Endothelial cell of umbilical vein (primary cell): ENCODE measurements at regions of chr21 and their contacts with region 1.

Region 1: GRCh38 chr21:35256467-35256988 is 207.4 kb upstream of the RUNX1 start:
- DNase-seq: peak; percentile 98
- H3K4me3 ChIP-seq: peak overlapping the region in 2 of 3 experiments; percentile 20 to 47
- H3K27ac ChIP-seq: peak overlapping the region; percentile 78
- H3K4me1 ChIP-seq: peaks cover 15% of the 10 kb centered on the region
- H3K27me3 ChIP-seq: no peaks in the 10 kb centered on the region
- CTCF ChIP-seq: no peak
- POLR2A ChIP-seq: no peak

Region 2: GRCh38 chr21:34807146-34807880 is 449.2 kb before region 1 on chr21:
- CTCF ChIA-PET with region 1: no interaction called
- POLR2A ChIA-PET with region 1: interaction called, 3 read pairs
- dilution Hi-C with region 1: no loop called
- intact Hi-C with region 1: loop called (anchors 10 kb)
- DNase-seq: peak; percentile 94
- H3K4me3 ChIP-seq: no peak overlapping the region
- H3K27ac ChIP-seq: peak overlapping the region; percentile 100
- H3K4me1 ChIP-seq: peaks cover 37% of the 10 kb centered on the region
- H3K27me3 ChIP-seq: no peaks in the 10 kb centered on the region
- CTCF ChIP-seq: no peak
- POLR2A ChIP-seq: no peak

Region 3: DNA sequence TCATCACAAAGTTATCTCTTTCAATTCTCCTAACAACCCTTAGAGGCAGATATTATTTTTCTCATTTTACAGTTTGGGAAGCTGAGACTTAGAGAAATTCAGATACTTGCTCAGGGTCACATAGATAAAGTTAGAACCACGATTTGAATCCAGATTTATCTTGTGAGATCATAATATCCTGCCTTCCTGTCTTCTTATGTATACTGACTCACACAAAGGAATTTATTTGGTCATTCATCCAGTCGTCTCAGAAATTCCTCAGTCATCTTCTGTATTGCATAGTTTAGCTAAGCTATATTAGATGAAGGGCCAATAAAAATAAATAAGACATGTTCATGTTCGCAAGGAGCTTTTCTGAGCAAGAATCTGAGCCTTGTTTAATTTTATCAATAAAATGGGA is 171.7 kb before region 1 on chr21:
- CTCF ChIA-PET with region 1: no interaction called
- POLR2A ChIA-PET with region 1: no interaction called
- dilution Hi-C with region 1: no loop called
- intact Hi-C with region 1: loop called (anchors 5 kb)
- DNase-seq: peak; percentile 73
- H3K4me3 ChIP-seq: no peak overlapping the region
- H3K27ac ChIP-seq: peak overlapping the region; percentile 77
- H3K4me1 ChIP-seq: peaks cover 25% of the 10 kb centered on the region
- H3K27me3 ChIP-seq: no peaks in the 10 kb centered on the region
- CTCF ChIP-seq: no peak
- POLR2A ChIP-seq: no peak

Region 4: GRCh38 chr21:35113064-35113463 is 143.5 kb before region 1 on chr21:
- CTCF ChIA-PET with region 1: no interaction called
- POLR2A ChIA-PET with region 1: no interaction called
- dilution Hi-C with region 1: no loop called
- intact Hi-C with region 1: no loop called
- DNase-seq: no peak
- H3K4me3 ChIP-seq: no peak overlapping the region
- H3K27ac ChIP-seq: no peak overlapping the region
- H3K4me1 ChIP-seq: no peaks in the 10 kb centered on the region
- H3K27me3 ChIP-seq: no peaks in the 10 kb centered on the region
- CTCF ChIP-seq: no peak
- POLR2A ChIP-seq: no peak

Region 5: DNA sequence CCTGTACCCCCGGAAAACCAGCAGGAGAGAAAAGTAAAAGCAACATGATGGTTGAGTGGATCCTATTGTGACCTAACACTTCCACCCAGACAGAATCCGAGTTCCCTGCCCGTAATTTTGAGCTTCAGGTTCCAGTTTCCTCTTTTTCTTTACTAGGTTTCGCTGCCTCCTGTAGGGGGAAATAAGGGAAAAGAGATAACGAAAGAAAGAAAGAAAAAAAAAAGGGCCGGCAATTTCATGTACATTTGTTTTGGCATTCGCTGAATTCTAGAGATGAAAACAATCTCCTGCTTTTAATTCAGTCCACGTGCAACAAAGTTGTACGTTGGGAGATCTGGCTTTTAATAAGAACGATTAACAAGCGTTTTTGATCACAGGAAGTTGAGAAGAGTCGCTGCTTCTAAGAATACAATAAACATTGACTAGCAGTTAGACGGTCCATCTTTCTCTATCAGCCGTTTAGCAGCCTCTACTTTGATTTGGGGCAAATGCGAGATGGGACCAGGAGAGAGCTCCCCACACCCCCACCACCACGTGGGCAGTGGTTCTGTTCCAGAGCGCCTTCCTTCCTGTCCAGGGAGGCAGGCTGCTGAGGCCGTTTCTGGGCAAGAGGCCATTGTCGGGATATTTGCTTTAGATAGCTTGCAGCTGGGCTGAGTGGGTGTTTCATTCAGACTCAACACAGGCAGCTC is 51.5 kb before region 1 on chr21:
- CTCF ChIA-PET with region 1: interaction called, 13 read pairs
- POLR2A ChIA-PET with region 1: interaction called, 5 read pairs
- dilution Hi-C with region 1: no loop called
- intact Hi-C with region 1: loop called (anchors 1 kb)
- DNase-seq: peak; percentile 96
- H3K4me3 ChIP-seq: peak overlapping the region in 1 of 3 experiments; percentile 24
- H3K27ac ChIP-seq: peak overlapping the region; percentile 53
- H3K4me1 ChIP-seq: peaks cover 35% of the 10 kb centered on the region
- H3K27me3 ChIP-seq: no peaks in the 10 kb centered on the region
- CTCF ChIP-seq: no peak
- POLR2A ChIP-seq: peak; percentile 42

Region 6: DNA sequence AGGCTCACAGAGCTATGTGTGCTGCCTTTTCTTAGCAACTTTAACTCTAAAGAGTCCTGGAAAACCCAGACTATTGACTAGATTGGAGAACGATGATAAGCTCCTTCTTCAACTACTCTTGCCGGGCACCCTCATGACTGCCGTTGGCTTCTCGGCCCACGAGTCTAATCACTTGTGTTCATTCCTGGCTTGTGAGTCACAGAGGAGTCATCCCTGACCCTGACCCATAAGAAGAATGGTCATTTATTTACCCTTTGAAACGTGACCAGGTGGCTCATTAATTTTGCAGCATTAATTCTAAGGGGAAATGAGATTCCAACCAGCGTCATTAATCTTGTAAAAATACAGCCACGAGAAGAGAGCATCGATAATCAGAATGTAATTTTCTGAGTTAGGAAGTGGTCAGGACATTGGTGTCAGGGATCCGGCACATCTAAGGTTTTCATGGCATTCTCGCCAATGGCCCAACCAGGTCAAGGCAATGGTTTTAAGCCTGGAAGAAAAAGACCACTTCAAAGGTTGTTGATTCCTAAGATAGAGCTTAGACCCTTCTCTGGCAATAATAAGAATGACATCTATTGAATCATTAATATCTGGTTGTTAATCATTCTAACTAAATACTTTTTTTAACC is 23.9 kb before region 1 on chr21:
- CTCF ChIA-PET with region 1: interaction called, 7 read pairs
- POLR2A ChIA-PET with region 1: no interaction called
- dilution Hi-C with region 1: no loop called
- intact Hi-C with region 1: loop called (anchors 1 kb)
- DNase-seq: peak; percentile 93
- H3K4me3 ChIP-seq: no peak overlapping the region
- H3K27ac ChIP-seq: peak overlapping the region; percentile 70
- H3K4me1 ChIP-seq: peaks cover 19% of the 10 kb centered on the region
- H3K27me3 ChIP-seq: no peaks in the 10 kb centered on the region
- CTCF ChIP-seq: no peak
- POLR2A ChIP-seq: no peak